ENCODE measurements at regions of chr14 and their contacts with region 1.

Region 1: DNA sequence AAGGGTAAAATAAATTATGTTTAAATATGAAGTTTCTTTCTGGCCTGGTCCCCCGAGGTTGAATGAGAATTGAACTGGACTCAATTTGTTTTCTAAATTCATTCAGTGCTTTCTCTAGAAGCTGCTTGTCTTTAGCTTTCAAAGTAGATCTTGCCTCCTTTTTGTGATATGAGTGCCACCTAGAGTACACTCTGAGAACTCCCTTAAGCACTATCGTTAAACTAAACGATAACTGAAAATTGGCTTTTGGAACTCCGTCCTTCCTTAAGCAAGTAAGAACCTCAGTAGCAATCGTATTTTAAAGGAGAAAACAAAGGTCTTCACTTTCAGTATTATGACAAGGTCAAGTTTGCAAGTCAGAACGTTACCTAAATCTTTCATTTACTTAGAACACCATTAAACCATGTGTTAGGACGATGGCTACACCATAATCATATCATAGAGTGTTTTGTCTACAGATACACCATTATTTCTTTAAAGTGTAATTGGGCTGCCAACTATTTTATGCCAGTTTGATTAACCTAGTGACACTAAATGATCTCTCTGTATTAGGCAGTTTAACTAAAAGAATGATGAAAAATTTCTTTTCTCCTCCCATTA is 364.8 kb downstream of the SNAPC1 start:
- DNase-seq: peak; percentile 72
- ATAC-seq: peak; percentile 95
- H3K4me3 ChIP-seq: no peak overlapping the region
- H3K27ac ChIP-seq: no peak overlapping the region
- H3K4me1 ChIP-seq: no peaks in the 10 kb centered on the region
- H3K27me3 ChIP-seq: peaks cover 1% of the 10 kb centered on the region; the same call in 1 of the 2 replicates
- CTCF ChIP-seq: peak; percentile 87
- POLR2A ChIP-seq: peak; percentile 33; the same call in 1 of the 2 replicates
- RAD21 ChIP-seq: peak; percentile 92

Region 2: DNA sequence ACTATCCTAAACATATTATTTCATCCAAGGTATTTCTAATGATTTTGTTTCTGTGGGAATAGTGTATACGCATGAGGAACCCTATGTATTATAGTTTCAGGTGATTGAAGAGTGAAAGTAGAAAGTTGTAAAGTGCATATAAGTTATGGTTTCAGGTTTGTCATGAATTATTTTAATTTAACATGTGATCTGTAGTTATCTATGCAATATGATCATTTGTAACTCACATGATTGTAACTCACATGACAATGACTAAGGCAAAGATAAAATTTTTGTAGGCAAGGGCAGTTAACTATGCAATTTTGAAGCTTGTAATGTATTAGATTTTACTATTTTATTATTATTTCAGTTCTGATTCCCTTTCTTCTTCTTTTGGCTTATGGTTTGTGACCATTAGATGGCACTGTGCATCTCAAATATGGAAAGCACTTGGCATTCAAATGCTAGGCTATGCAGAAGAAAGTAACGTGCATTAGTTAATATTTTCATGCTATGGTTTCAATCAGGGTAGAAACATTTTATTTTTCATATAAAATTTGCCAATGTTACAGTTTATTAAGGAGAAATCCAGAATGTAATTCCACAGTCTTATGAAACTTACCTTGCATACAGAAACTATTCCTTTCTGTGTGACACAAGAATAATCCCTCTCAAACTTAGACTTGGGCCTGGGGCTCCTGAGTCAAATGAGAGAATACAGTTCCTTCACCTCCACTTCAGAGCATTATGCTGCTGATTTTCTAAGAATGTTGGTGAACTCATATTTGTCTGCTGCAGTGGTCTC is 830.1 kb before region 1 on chr14:
- CTCF ChIA-PET with region 1: no interaction called
- POLR2A ChIA-PET with region 1: no interaction called
- dilution Hi-C with region 1: no loop called
- in situ Hi-C with region 1: no loop called
- intact Hi-C with region 1: loop called (anchors 2 kb)
- DNase-seq: peak; percentile 56
- ATAC-seq: peak; percentile 87
- H3K4me3 ChIP-seq: no peak overlapping the region
- H3K27ac ChIP-seq: no peak overlapping the region
- H3K4me1 ChIP-seq: no peaks in the 10 kb centered on the region
- H3K27me3 ChIP-seq: peaks cover 17% of the 10 kb centered on the region
- CTCF ChIP-seq: peak; percentile 72
- POLR2A ChIP-seq: no peak
- RAD21 ChIP-seq: peak; percentile 54

Region 3: DNA sequence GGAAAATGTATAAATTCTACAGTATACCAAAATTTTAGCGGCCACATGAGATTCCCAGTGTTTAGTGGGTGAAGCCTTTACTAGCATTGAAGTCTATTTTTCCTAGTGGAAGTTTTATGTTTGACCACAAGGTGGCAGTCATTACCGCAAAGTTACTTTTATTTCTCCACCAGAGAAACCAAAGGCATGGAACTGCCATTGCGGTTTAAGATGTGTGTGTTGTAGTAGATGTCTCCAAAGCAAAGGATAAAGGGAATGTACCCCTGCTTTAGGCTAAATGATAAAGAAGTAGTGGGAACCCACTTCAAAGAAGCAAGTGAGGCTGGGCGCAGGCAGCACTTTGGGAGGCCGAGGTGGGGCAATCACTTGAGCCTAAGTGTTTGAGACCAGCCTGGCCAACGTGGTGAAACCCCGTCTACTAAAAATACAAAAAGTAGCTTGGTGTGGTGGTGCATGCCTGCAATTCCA is 665.1 kb before region 1 on chr14:
- CTCF ChIA-PET with region 1: no interaction called
- POLR2A ChIA-PET with region 1: no interaction called
- dilution Hi-C with region 1: no loop called
- in situ Hi-C with region 1: loop called (anchors 5 kb)
- intact Hi-C with region 1: loop called (anchors 2 kb)
- DNase-seq: peak; percentile 77
- ATAC-seq: peak; percentile 49
- H3K4me3 ChIP-seq: no peak overlapping the region
- H3K27ac ChIP-seq: peak overlapping the region; percentile 61; the same call in 1 of the 2 replicates
- H3K4me1 ChIP-seq: peaks cover 20% of the 10 kb centered on the region
- H3K27me3 ChIP-seq: no peaks in the 10 kb centered on the region
- CTCF ChIP-seq: peak; percentile 77
- POLR2A ChIP-seq: peak; percentile 39; the same call in 1 of the 2 replicates
- RAD21 ChIP-seq: peak; percentile 94

Region 4: GRCh38 chr14:61894452-61895077 is 232.4 kb before region 1 on chr14:
- CTCF ChIA-PET with region 1: interaction called, 7 read pairs
- POLR2A ChIA-PET with region 1: no interaction called
- dilution Hi-C with region 1: no loop called
- in situ Hi-C with region 1: no loop called
- intact Hi-C with region 1: loop called (anchors 1 kb)
- DNase-seq: peak; percentile 70
- ATAC-seq: peak; percentile 91
- H3K4me3 ChIP-seq: no peak overlapping the region
- H3K27ac ChIP-seq: no peak overlapping the region
- H3K4me1 ChIP-seq: no peaks in the 10 kb centered on the region
- H3K27me3 ChIP-seq: peaks cover 17% of the 10 kb centered on the region
- CTCF ChIP-seq: peak; percentile 77
- POLR2A ChIP-seq: no peak
- RAD21 ChIP-seq: peak; percentile 81

Region 5: DNA sequence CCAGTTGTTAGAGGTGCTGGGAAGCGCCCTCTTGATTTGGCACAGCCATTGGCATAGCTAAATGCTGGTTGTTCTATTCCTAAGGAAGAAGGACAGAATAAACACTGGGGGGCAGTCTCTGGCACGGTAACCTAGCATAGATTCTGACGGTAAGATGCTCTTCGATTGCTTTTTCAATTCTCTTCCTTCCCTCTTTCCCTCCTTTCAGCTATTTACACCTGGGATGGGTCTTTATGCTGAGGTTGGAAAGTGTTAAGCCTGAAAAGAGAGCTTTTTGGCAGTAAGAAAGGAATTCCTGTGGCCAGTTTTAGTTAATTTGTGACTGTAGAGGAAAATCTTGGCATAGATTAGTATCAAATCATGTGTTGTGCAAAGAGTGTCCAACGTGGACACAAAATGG is 201.9 kb before region 1 on chr14:
- CTCF ChIA-PET with region 1: interaction called, 30 read pairs
- POLR2A ChIA-PET with region 1: no interaction called
- dilution Hi-C with region 1: loop called (anchors 25 kb)
- in situ Hi-C with region 1: no loop called
- intact Hi-C with region 1: loop called (anchors 1 kb)
- DNase-seq: peak; percentile 29
- ATAC-seq: no peak
- H3K4me3 ChIP-seq: no peak overlapping the region
- H3K27ac ChIP-seq: no peak overlapping the region
- H3K4me1 ChIP-seq: peaks cover 25% of the 10 kb centered on the region
- H3K27me3 ChIP-seq: no peaks in the 10 kb centered on the region
- CTCF ChIP-seq: peak; percentile 40
- POLR2A ChIP-seq: no peak
- RAD21 ChIP-seq: peak; percentile 55

Region 6: GRCh38 chr14:61973868-61974321 is 153.1 kb before region 1 on chr14:
- CTCF ChIA-PET with region 1: no interaction called
- POLR2A ChIA-PET with region 1: no interaction called
- dilution Hi-C with region 1: no loop called
- in situ Hi-C with region 1: no loop called
- intact Hi-C with region 1: no loop called
- DNase-seq: peak; percentile 87
- ATAC-seq: peak; percentile 92
- H3K4me3 ChIP-seq: no peak overlapping the region
- H3K27ac ChIP-seq: peak overlapping the region; percentile 41
- H3K4me1 ChIP-seq: peaks cover 8% of the 10 kb centered on the region
- H3K27me3 ChIP-seq: no peaks in the 10 kb centered on the region
- CTCF ChIP-seq: no peak
- POLR2A ChIP-seq: no peak
- RAD21 ChIP-seq: no peak

Region 7: GRCh38 chr14:62162998-62163589 is 36.1 kb after region 1 on chr14:
- CTCF ChIA-PET with region 1: no interaction called
- POLR2A ChIA-PET with region 1: no interaction called
- dilution Hi-C with region 1: no loop called
- in situ Hi-C with region 1: no loop called
- intact Hi-C with region 1: no loop called
- DNase-seq: peak; percentile 56
- ATAC-seq: peak; percentile 84
- H3K4me3 ChIP-seq: no peak overlapping the region
- H3K27ac ChIP-seq: no peak overlapping the region
- H3K4me1 ChIP-seq: no peaks in the 10 kb centered on the region
- H3K27me3 ChIP-seq: peaks cover 15% of the 10 kb centered on the region
- CTCF ChIP-seq: peak; percentile 82
- POLR2A ChIP-seq: no peak
- RAD21 ChIP-seq: peak; percentile 87

Region 8: DNA sequence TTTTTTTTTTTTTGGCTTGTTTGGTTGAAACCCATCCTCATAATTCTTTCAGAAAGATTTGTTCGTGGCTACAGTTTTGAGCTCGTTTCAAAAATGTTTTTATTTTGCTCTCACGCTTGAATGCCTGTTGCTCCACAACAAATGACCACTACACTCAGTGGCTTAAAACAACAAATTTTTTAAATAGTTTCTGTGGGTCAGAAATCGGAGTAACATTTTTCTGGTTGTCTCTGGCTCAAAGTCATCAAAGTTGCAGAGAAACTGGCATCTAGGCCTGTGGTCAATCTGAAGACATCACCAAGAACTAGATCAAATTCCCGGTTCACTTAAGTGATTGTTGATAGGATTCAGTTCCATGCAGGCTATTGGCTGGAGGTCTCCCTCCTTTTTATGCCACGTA is 195.2 kb after region 1 on chr14:
- CTCF ChIA-PET with region 1: no interaction called
- POLR2A ChIA-PET with region 1: no interaction called
- dilution Hi-C with region 1: no loop called
- in situ Hi-C with region 1: no loop called
- intact Hi-C with region 1: no loop called
- DNase-seq: no peak
- ATAC-seq: no peak
- H3K4me3 ChIP-seq: no peak overlapping the region
- H3K27ac ChIP-seq: no peak overlapping the region
- H3K4me1 ChIP-seq: no peaks in the 10 kb centered on the region
- H3K27me3 ChIP-seq: no peaks in the 10 kb centered on the region
- CTCF ChIP-seq: no peak
- POLR2A ChIP-seq: no peak
- RAD21 ChIP-seq: no peak

Measured in IMR-90 (cell line).